Activated CD8-positive, alpha-beta T cell treated with anti-CD3 and anti-CD28 coated beads for 36 hours (primary cell): ENCODE measurements at regions of chr14 and their contacts with region 1.

Region 1: GRCh38 chr14:23588884-23589598 is 10.5 kb upstream of the JPH4 start:
- DNase-seq: peak; percentile 91
- ATAC-seq: peak; percentile 100
- H3K4me3 Mint-ChIP-seq: no peak overlapping the region
- H3K27ac Mint-ChIP-seq: no peak overlapping the region
- H3K4me1 Mint-ChIP-seq: peaks cover 11% of the 10 kb centered on the region
- H3K27me3 Mint-ChIP-seq: peaks cover 9% of the 10 kb centered on the region
- CTCF ChIP-seq: peak; percentile 82

Region 2: DNA sequence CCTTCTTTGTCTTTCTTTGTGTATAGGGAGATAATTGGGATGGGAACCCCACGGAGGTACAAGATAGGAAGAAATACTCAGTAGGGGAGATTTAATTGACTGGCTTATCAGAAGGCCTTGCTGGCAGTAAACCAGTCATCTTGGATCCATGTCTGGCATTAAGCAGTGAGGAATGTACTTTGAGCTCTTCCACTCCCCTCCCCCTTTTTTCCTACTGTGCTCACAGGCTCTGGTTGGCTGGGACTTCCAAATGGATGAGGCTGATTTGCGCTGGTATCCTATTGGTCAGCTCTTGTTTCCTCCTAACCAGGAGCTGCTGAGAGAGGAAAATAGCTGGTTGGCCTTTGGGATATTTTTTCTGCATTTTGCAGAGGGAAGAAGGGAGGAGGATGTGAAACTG is 94.8 kb before region 1 on chr14:
- CTCF ChIA-PET with region 1: no interaction called
- POLR2A ChIA-PET with region 1: no interaction called
- intact Hi-C with region 1: no loop called
- DNase-seq: no peak
- ATAC-seq: no peak
- H3K4me3 Mint-ChIP-seq: no peak overlapping the region
- H3K27ac Mint-ChIP-seq: no peak overlapping the region
- H3K4me1 Mint-ChIP-seq: no peaks in the 10 kb centered on the region
- H3K27me3 Mint-ChIP-seq: no peaks in the 10 kb centered on the region
- CTCF ChIP-seq: no peak

Region 3: GRCh38 chr14:23567192-23568020 is 21.6 kb before region 1 on chr14 and contains the start of gene AP1G2:
- CTCF ChIA-PET with region 1: interaction called, 20 read pairs
- POLR2A ChIA-PET with region 1: no interaction called
- intact Hi-C with region 1: no loop called
- DNase-seq: peak; percentile 94
- ATAC-seq: peak; percentile 97
- H3K4me3 Mint-ChIP-seq: peak within 1 kb of the TSS; percentile 94
- H3K27ac Mint-ChIP-seq: peak within 1 kb of the TSS; percentile 99
- H3K4me1 Mint-ChIP-seq: peaks cover 23% of the 10 kb centered on the region
- H3K27me3 Mint-ChIP-seq: peaks cover 3% of the 10 kb centered on the region
- CTCF ChIP-seq: no peak
- total RNA-seq, gene AP1G2: 146 to 155 TPM

Region 4: DNA sequence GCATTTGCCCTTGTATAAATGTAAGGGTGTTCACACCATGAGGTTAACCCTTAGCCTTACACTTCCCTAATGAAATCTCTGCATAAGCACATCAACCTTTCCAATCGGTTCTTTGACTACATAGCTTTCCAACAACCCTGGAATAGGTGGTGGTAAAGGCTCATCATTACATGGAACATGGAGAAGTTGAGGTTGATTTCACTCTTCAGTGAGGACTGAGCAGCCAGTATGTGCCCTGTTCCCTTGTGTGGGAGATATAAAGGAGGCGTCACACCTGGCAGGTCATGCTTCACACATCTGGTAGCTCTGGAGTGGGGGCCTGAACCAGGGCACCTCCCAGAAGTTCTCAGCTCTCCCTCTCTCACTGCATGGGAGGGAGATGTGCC is 11.3 kb after region 1 on chr14:
- CTCF ChIA-PET with region 1: interaction called, 11 read pairs
- POLR2A ChIA-PET with region 1: no interaction called
- intact Hi-C with region 1: no loop called
- DNase-seq: no peak
- ATAC-seq: no peak
- H3K4me3 Mint-ChIP-seq: no peak overlapping the region
- H3K27ac Mint-ChIP-seq: no peak overlapping the region
- H3K4me1 Mint-ChIP-seq: peaks cover under 1% of the 10 kb centered on the region
- H3K27me3 Mint-ChIP-seq: no peaks in the 10 kb centered on the region
- CTCF ChIP-seq: no peak

Region 5: DNA sequence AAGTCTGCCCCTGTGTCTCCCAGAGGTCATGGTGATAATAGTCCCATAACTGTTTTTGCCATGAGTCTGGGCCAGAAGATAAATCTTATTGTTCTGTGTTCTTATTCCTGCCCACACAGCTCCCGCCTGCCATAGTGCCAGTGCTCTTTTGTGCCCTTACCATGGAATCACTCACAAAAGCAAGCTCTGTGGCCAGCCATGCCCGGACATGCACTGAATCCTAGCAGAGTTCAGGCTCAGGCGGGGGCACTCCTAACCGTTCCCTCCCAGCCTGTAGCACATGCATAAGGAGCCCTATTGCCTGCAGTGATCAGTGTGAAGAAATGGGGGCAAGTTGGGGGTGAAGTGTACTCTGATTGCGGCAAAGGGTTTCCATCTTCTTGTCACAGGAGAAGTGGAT is 80.4 kb after region 1 on chr14:
- CTCF ChIA-PET with region 1: interaction called, 11 read pairs
- POLR2A ChIA-PET with region 1: no interaction called
- intact Hi-C with region 1: no loop called
- DNase-seq: no peak
- ATAC-seq: no peak
- H3K4me3 Mint-ChIP-seq: no peak overlapping the region
- H3K27ac Mint-ChIP-seq: no peak overlapping the region
- H3K4me1 Mint-ChIP-seq: no peaks in the 10 kb centered on the region
- H3K27me3 Mint-ChIP-seq: peaks cover 3% of the 10 kb centered on the region
- CTCF ChIP-seq: no peak

Region 6: GRCh38 chr14:23910101-23910875 is 321.2 kb after region 1 on chr14:
- CTCF ChIA-PET with region 1: interaction called, 18 read pairs
- POLR2A ChIA-PET with region 1: no interaction called
- intact Hi-C with region 1: no loop called
- DNase-seq: peak; percentile 35
- ATAC-seq: no peak
- H3K4me3 Mint-ChIP-seq: no peak overlapping the region
- H3K27ac Mint-ChIP-seq: no peak overlapping the region
- H3K4me1 Mint-ChIP-seq: no peaks in the 10 kb centered on the region
- H3K27me3 Mint-ChIP-seq: peaks cover 10% of the 10 kb centered on the region
- CTCF ChIP-seq: peak; percentile 78

Region 7: DNA sequence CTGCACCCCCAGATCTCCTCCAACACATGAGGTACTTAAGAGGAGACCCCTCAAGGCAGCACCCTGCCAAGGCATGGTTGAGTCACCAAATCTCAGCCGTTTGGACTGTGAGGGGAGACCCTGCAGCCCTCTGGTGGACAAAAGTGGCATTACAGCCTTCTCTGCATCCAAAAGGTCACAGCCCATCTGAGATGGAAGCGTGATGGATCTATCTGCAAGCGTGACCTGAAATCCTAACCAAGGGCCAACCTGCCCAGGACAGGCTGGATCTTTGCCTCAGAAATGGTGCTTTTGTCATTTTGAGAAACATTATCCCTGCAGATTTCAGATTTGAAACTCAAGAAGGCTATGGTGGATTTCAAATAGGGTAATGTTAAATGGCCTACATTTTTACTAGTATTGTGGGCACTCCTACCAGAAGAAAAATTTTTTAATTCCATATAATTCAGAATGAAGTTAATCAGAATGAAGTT is 340.8 kb after region 1 on chr14:
- CTCF ChIA-PET with region 1: interaction called, 28 read pairs
- POLR2A ChIA-PET with region 1: no interaction called
- intact Hi-C with region 1: no loop called
- DNase-seq: peak; percentile 95
- ATAC-seq: peak; percentile 97
- H3K4me3 Mint-ChIP-seq: no peak overlapping the region
- H3K27ac Mint-ChIP-seq: no peak overlapping the region
- H3K4me1 Mint-ChIP-seq: no peaks in the 10 kb centered on the region
- H3K27me3 Mint-ChIP-seq: no peaks in the 10 kb centered on the region
- CTCF ChIP-seq: peak; percentile 98